ENCODE measurements at regions of chr11 and their contacts with region 1.

Region 1: DNA sequence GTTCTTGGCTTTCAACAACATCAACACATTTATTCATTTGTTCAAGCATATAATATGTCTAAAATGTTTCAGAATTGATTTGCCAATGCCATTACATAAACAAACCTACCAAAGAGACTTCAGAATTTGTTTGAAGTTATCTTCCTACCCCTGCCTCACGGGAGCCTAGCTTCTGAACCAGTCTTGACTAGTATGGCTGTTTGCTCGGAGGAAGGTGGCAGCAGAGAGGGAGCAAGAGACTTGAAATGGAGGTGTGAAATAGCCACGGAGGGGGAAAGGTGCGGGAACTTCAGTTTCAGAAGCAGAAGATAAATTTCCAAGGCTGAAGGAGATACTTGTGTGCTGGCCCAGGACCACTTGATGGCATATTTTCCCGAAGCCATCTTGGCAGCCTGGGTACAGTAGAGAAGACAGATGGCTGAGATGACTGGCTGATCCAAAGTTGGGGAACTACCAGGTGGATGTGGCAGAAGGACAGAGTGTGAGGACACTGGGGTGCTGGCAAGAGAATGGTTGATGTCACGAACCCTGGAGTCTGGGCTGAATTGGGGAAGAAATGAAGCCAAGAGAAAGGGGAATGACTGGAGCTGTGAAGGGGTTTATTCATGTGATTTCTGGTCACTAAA is 14.0 kb upstream of the MTCH2 start:
- DNase-seq: no peak

Region 2: GRCh38 chr11:47715082-47715669 is 58.8 kb after region 1 on chr11 and contains the start of gene AGBL2:
- intact Hi-C with region 1: loop called in 1 of 2 experiments (anchors 2 kb)
- DNase-seq: peak; percentile 95
- total RNA-seq, gene AGBL2: 0.48 to 0.79 TPM

Region 3: GRCh38 chr11:47786373-47786772 is 130.0 kb after region 1 on chr11:
- intact Hi-C with region 1: no loop called
- DNase-seq: no peak

Measured in posterior vena cava (tissue), 2 donors.